ENCODE measurements at regions of chr1 and their contacts with region 1.

Region 1: DNA sequence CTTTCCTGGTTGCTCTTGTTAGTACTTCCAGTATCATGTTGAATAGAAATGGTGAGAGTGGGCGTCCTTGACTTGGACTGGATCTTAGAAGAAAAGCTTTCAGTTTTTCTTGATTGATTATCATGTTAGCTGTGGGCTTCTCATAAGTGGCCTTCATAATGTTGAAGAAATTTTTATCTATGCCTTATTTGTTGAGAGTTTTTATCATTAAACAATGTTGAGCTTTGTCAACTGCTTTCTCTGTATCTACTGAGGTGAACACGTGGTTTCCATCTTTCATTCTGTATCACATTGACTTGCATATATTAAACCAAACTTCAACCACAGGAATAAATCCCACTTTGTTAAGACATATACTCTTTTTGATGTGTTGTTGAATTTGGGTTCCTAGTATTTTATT is 29.4 kb downstream of the PRKAB2 start:
- DNase-seq: no peak
- ATAC-seq: no peak
- H3K4me3 Mint-ChIP-seq: no peak overlapping the region
- H3K27ac Mint-ChIP-seq: no peak overlapping the region
- H3K4me1 Mint-ChIP-seq: no peaks in the 10 kb centered on the region
- H3K27me3 Mint-ChIP-seq: peaks cover 23% of the 10 kb centered on the region

Region 2: DNA sequence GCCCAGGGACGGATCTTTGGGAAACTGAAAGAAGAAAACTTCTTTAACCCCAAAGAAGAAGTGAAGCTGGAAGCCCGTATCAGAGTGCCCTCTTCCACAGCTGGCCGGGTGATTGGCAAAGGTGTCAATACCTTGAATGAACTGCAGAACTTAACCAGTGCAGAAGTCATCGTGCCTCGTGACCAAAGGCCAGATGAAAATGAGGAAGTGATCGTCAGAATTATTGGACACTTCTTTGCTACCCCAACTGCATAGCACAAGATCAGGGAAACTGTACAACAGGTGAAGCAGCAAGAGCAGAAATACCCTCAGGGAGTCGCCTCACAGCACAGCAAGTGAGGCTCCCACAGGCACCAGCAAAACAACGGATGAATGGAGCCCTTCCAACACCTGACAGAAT is 90.7 kb before region 1 on chr1:
- CTCF ChIA-PET with region 1: no interaction called
- POLR2A ChIA-PET with region 1: no interaction called
- intact Hi-C with region 1: no loop called
- DNase-seq: no peak
- ATAC-seq: no peak
- H3K4me3 Mint-ChIP-seq: no peak overlapping the region
- H3K27ac Mint-ChIP-seq: no peak overlapping the region
- H3K4me1 Mint-ChIP-seq: peaks cover 8% of the 10 kb centered on the region
- H3K27me3 Mint-ChIP-seq: peaks cover 5% of the 10 kb centered on the region

Region 3: DNA sequence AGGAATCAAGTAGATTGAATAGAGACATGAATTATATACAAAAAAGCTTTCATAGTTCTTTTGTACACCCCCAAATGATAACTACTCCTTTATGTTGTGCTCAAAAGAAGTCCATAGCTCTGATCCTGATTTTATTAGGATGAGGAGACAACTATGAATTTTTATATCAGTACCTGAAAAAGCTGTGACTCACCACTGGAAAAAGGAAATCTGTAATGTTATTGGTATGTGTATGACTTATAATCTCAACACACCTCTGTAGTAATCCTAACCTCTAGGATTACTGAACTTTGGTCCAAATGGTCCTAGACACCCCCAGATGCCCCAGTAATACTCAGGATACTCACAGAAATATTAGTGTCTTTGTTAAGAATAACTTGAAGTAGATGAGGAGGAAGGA is 19.2 kb after region 1 on chr1:
- CTCF ChIA-PET with region 1: no interaction called
- POLR2A ChIA-PET with region 1: no interaction called
- intact Hi-C with region 1: no loop called
- DNase-seq: no peak
- ATAC-seq: no peak
- H3K4me3 Mint-ChIP-seq: no peak overlapping the region
- H3K27ac Mint-ChIP-seq: no peak overlapping the region
- H3K4me1 Mint-ChIP-seq: no peaks in the 10 kb centered on the region
- H3K27me3 Mint-ChIP-seq: no peaks in the 10 kb centered on the region

Region 4: DNA sequence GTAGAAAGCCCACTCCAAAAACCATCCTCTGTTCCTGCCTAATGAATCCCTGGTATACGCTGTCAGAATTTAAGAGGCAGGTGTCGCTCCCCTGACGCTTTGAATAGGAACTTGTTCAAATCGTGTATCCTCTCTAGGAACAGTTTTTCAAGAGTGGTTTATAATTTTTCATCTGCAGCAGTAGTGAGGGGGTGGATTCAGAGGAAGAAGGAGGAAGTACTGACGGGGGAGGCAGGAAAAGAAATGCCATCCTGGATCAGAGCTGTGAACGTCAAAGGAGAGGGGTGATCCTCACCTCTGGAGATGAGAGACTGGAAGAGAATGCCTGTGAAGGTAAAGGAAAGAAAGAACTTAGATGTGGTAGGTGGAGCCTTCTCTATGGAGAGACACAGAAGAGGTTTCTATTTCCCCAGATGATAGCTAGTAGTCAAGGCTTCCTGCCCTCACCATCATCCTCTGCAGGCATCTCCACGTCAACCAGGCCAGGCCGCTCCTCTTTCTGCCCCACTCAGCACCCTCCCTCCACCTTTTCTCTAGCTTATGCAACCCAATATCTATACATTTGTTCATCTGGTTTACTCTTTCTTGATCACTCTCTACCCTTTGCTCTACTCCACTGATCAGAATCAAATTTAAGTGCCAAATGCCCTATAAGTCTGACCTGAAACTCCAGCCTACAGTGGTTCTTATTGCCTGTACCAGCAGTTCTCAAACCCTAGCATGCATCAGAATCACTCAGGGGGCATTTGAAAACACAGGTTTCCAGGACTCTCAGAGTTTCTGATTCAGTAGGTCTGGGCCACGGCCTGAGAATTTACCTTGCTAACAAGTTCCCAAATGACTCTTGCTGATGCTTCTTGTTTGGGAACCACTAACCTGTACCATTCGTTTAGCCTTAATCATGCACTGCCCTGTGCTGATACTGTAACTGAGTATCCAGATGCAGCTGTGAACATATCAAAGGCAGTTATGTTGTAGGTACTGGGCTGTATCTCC is 385.4 kb after region 1 on chr1:
- CTCF ChIA-PET with region 1: no interaction called
- POLR2A ChIA-PET with region 1: interaction called, 11 read pairs
- intact Hi-C with region 1: no loop called
- DNase-seq: peak; percentile 44
- ATAC-seq: peak; percentile 87
- H3K4me3 Mint-ChIP-seq: no peak overlapping the region
- H3K27ac Mint-ChIP-seq: no peak overlapping the region
- H3K4me1 Mint-ChIP-seq: peaks cover 3% of the 10 kb centered on the region
- H3K27me3 Mint-ChIP-seq: no peaks in the 10 kb centered on the region

Region 5: GRCh38 chr1:147647796-147648633 is 505.1 kb after region 1 on chr1:
- CTCF ChIA-PET with region 1: no interaction called
- POLR2A ChIA-PET with region 1: no interaction called
- intact Hi-C with region 1: no loop called
- DNase-seq: peak; percentile 38
- ATAC-seq: peak; percentile 77
- H3K4me3 Mint-ChIP-seq: peak overlapping the region; percentile 24
- H3K27ac Mint-ChIP-seq: peak overlapping the region; percentile 48
- H3K4me1 Mint-ChIP-seq: peaks cover 47% of the 10 kb centered on the region
- H3K27me3 Mint-ChIP-seq: no peaks in the 10 kb centered on the region

Measured in activated CD4-positive, alpha-beta T cell treated with anti-CD3 and anti-CD28 coated beads for 36 hours (primary cell).